Posterior cingulate gyrus (tissue), 11 donors: ENCODE measurements at regions of chr9 and their contacts with region 1.

Region 1: DNA sequence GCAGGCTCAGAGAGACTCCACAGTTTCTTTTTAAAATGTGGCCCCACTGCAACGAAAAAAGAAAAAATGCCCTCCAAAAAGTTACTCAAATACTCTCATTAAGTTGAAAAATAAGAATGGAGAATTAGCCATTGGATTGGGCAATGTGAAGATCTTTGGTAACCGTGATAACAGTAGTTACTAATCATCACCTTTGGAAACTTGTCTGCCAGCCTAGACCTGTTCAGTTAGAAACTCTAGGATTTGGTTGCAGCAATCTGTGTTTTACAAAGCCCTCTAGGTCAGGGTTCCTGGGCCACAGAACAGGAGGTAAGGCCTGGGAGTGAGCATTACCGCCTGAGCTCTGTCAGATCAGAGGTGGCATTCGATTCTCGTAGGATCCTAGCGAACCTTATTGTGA is 34.2 kb downstream of the VPS13A start:
- DNase-seq: no peak

Region 2: DNA sequence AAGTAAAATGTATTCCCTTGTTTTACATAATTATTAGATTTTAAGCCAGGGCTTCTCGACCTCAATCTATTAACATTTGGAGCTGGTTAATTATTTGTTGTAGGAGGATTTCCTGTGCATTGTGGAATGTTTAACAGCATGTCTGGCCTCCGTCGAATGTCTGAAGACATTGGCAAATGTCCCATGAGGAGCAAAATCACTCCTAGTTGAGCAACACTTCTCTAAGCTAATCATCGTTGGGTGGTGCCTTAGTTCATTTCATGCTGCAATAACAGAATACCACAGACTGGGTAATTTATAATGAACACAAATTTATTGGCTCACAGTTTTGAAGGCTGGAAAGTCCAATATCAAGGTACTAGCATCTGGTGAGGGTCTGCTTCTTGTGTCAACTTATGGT is 47.7 kb before region 1 on chr9:
- intact Hi-C with region 1: loop called (anchors 1 kb)
- DNase-seq: no peak